ENCODE measurements at regions of chr6 and their contacts with region 1.

Region 1: DNA sequence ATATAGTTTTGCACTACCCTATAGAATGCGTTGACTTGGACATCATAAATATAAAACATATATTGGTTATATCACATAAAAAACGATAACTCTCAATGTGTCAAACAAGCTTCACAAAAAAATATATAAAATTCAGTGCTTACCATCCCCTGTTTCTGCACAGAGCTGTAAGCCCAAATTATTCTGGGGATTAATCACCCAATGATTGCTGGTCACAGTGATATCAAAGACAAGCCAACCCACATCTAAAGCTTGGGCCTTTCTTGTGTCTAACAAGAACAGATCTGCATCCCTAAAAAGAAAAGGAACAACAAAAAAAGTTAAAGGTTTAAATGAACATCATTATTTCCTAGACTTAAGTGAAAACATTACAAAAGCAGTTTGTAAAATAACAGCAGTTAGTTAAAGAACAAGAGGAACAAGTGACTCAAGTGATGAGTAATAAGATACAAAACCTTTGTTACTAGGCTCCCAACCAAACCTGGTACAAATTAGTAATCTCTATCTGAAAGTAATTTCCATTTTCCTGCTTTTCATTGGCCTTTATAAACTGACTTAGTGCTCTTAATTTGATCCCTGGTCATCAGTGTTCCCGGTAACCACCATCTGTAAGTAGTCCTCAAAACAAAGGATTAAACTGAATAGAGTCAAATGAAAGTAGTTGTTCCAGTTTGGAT is 81.1 kb downstream of the BMP5 start:
- DNase-seq: no peak
- ATAC-seq: no peak
- H3K4me3 ChIP-seq: no peak overlapping the region
- H3K27ac ChIP-seq: no peak overlapping the region
- H3K4me1 ChIP-seq: no peaks in the 10 kb centered on the region
- H3K27me3 ChIP-seq: no peaks in the 10 kb centered on the region
- CTCF ChIP-seq: no peak
- POLR2A ChIP-seq: no peak

Region 2: GRCh38 chr6:55782275-55782674 is 12.0 kb before region 1 on chr6:
- intact Hi-C with region 1: loop called in 1 of 10 experiments (anchors 1 kb)
- DNase-seq: no peak
- ATAC-seq: no peak
- H3K4me3 ChIP-seq: no peak overlapping the region
- H3K27ac ChIP-seq: no peak overlapping the region
- H3K4me1 ChIP-seq: no peaks in the 10 kb centered on the region
- H3K27me3 ChIP-seq: no peaks in the 10 kb centered on the region
- CTCF ChIP-seq: no peak
- POLR2A ChIP-seq: no peak